Aorta (tissue), 5 donors: ENCODE measurements at regions of chr4 and their contacts with region 1.

Region 1: GRCh38 chr4:139177868-139178611 is 1.0 kb upstream of the ELF2 start:
- DNase-seq: peak; percentile 98 to 99
- ATAC-seq: peak; percentile 94
- H3K4me3 ChIP-seq: peak overlapping the region; percentile 75 to 92
- H3K27ac ChIP-seq: peak overlapping the region; percentile 94 to 97
- H3K4me1 ChIP-seq: no peaks in the 10 kb centered on the region
- H3K27me3 ChIP-seq: no peaks in the 10 kb centered on the region

Region 2: GRCh38 chr4:138751309-138751708 is 426.7 kb before region 1 on chr4:
- intact Hi-C with region 1: no loop called
- DNase-seq: no peak
- ATAC-seq: no peak
- H3K4me3 ChIP-seq: no peak overlapping the region
- H3K27ac ChIP-seq: no peak overlapping the region
- H3K4me1 ChIP-seq: peaks cover 0 to 3% of the 10 kb centered on the region in 2 donors
- H3K27me3 ChIP-seq: no peaks in the 10 kb centered on the region

Region 3: DNA sequence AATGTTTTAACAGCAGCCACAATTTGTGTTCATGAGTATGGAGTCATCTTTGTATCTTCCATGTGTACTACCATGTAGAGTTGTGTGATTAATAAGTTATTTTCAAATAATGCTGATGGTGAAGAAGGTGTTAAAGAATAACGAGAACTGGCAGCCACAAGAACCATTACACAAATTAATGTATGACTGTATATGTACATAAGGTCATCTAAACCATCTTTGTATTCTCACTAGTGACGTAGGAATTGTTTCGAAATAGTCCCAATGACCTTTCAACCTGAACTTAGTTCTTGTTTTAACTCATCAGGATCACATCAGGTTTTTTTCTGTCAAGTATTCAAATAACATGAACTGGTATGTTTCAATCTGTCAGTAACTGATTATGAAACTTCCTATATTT is 210.7 kb before region 1 on chr4:
- intact Hi-C with region 1: no loop called
- DNase-seq: no peak
- ATAC-seq: no peak
- H3K4me3 ChIP-seq: no peak overlapping the region
- H3K27ac ChIP-seq: no peak overlapping the region
- H3K4me1 ChIP-seq: no peaks in the 10 kb centered on the region
- H3K27me3 ChIP-seq: no peaks in the 10 kb centered on the region

Region 4: DNA sequence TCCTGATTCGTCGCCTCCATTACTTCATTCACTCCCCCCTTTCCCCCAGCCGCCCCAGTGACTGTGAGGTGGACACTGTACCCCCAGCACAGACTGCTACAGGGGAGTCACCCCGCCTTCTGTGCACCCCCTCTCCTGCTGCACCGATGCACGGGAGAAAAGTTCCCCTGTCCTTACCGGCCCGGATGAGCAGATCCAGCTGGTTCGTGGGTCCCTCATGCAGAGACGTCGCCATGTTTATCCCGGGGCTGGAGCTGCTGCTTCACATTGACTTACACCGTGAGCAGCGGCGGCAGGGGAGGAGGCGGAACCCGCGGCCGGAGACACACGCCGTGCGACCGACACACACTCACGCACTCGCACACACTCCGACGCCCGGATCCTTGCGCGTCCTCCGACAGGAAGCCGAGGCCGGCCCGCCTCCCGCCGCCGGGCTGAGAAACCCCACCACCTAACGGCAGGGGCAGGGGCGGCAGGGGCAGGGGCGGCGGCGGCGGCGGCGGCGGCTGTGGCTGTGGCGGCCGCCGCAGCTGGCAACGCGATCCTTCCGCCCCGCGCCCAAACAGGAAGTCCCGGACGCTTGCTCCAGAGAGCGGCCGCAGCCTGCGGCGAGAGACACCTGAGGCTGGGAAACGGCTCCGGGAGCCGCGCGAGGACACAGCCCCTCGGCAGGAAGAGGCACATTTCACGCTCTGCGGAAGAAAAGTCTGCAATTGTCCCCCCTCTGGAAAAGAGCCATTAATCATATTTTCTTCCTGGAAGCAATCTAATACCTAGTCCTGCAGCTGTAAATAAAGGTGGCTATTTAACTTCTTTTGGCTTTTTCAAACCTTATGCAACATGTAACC is 93.9 kb before region 1 on chr4:
- intact Hi-C with region 1: loop called (anchors 5 kb)
- DNase-seq: peak; percentile 92 to 94
- ATAC-seq: peak; percentile 91
- H3K4me3 ChIP-seq: peak overlapping the region; percentile 74 to 95
- H3K27ac ChIP-seq: peak overlapping the region; percentile 32 to 88
- H3K4me1 ChIP-seq: no peaks in the 10 kb centered on the region
- H3K27me3 ChIP-seq: no peaks in the 10 kb centered on the region

Region 5: GRCh38 chr4:139099366-139099982 is 78.6 kb before region 1 on chr4:
- intact Hi-C with region 1: loop called in 1 of 2 experiments (anchors 5 kb)
- DNase-seq: peak in 1 of 2 donors; percentile 79
- ATAC-seq: peak; percentile 82
- H3K4me3 ChIP-seq: no peak overlapping the region
- H3K27ac ChIP-seq: no peak overlapping the region
- H3K4me1 ChIP-seq: no peaks in the 10 kb centered on the region
- H3K27me3 ChIP-seq: no peaks in the 10 kb centered on the region

Region 6: GRCh38 chr4:139131209-139131870 is 46.7 kb before region 1 on chr4:
- intact Hi-C with region 1: loop called in 1 of 2 experiments (anchors 5 kb)
- DNase-seq: no peak
- ATAC-seq: peak; percentile 19
- H3K4me3 ChIP-seq: no peak overlapping the region
- H3K27ac ChIP-seq: peak overlapping the region in 1 of 2 donors; percentile 95
- H3K4me1 ChIP-seq: peaks cover 0 to 5% of the 10 kb centered on the region in 2 donors
- H3K27me3 ChIP-seq: no peaks in the 10 kb centered on the region

Region 7: GRCh38 chr4:139301113-139301820 is 123.2 kb after region 1 on chr4 and contains the start of gene NAA15:
- intact Hi-C with region 1: loop called in 1 of 2 experiments (anchors 2 kb)
- DNase-seq: peak; percentile 99
- ATAC-seq: peak; percentile 99
- H3K4me3 ChIP-seq: peak within 1 kb of the TSS; percentile 87 to 95
- H3K27ac ChIP-seq: peak within 1 kb of the TSS; percentile 77 to 97
- H3K4me1 ChIP-seq: no peaks in the 10 kb centered on the region
- H3K27me3 ChIP-seq: no peaks in the 10 kb centered on the region
- total RNA-seq, gene NAA15: 42.8 to 45.4 TPM